ENCODE measurements at regions of chr15 and their contacts with region 1.

Region 1: DNA sequence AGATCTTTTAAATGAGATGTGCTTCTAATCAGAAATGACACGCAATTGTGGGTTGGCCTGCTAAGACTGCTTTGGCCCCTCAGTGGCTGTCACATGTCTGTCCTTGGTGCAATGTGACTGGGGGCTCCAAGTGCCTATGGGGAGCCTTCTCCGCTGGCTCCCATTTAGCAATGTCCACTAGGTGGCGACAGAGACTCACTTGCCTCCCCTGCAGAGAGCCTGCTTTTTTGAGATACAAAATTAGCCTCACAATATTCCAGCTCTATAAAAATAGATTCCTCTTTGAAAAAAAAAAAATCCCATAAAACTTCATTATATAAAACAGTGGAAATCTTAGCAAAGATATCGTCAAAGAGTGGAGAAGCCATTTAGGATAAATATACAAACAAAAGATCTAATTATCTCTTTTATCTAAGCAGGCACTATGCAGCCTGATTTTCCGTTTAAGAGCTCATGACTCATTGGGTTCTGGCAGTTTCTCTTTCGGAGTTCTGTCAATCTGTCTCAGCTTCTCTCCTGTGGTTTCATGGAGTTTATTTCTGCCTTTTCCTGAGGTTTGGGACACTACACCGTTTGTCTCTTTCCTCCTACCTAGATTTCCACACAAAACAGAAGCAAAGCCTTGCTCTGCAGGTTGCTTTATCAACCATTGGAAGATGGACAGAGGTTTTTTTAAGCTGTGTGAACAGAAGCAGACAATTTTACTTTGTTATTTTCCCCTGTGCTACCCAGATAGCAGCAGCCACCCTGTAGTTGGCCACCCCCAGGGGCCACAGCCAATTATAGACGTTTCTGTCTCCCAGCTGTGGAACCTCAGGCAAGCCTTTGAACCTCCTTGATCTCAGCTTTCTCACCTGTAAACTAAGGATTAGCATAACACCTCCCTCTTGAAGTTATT is 68.4 kb upstream of the TNFAIP8L3 start:
- DNase-seq: peak; percentile 81
- ATAC-seq: peak; percentile 95
- H3K4me3 Mint-ChIP-seq: no peak overlapping the region
- H3K27ac Mint-ChIP-seq: no peak overlapping the region
- H3K4me1 Mint-ChIP-seq: peaks cover 2% of the 10 kb centered on the region
- H3K27me3 Mint-ChIP-seq: peaks cover 17% of the 10 kb centered on the region
- CTCF ChIP-seq: peak; percentile 88

Region 2: DNA sequence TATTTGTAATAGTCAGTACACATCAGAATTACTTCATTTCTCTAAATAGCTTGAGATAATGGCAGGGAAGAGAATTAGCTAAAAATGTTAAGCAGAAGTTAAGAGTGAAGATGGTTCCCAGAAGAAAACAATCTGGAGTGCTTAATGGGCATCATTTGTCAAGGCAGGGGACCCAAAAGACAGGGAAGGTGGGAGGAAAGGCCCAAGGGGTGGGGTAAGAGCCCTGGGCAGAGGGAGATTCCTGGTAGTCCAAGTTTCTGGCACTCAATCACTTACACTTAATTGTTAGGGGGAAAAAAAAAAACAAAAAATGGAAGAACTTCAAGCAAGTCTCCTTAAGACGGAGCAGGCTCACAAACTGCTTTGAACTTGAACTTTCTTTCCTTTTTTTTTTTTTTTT is 97.3 kb before region 1 on chr15:
- CTCF ChIA-PET with region 1: interaction called, 10 read pairs
- POLR2A ChIA-PET with region 1: no interaction called
- intact Hi-C with region 1: no loop called
- DNase-seq: no peak
- ATAC-seq: no peak
- H3K4me3 Mint-ChIP-seq: no peak overlapping the region
- H3K27ac Mint-ChIP-seq: no peak overlapping the region
- H3K4me1 Mint-ChIP-seq: no peaks in the 10 kb centered on the region
- H3K27me3 Mint-ChIP-seq: peaks cover 16% of the 10 kb centered on the region
- CTCF ChIP-seq: no peak

Region 3: DNA sequence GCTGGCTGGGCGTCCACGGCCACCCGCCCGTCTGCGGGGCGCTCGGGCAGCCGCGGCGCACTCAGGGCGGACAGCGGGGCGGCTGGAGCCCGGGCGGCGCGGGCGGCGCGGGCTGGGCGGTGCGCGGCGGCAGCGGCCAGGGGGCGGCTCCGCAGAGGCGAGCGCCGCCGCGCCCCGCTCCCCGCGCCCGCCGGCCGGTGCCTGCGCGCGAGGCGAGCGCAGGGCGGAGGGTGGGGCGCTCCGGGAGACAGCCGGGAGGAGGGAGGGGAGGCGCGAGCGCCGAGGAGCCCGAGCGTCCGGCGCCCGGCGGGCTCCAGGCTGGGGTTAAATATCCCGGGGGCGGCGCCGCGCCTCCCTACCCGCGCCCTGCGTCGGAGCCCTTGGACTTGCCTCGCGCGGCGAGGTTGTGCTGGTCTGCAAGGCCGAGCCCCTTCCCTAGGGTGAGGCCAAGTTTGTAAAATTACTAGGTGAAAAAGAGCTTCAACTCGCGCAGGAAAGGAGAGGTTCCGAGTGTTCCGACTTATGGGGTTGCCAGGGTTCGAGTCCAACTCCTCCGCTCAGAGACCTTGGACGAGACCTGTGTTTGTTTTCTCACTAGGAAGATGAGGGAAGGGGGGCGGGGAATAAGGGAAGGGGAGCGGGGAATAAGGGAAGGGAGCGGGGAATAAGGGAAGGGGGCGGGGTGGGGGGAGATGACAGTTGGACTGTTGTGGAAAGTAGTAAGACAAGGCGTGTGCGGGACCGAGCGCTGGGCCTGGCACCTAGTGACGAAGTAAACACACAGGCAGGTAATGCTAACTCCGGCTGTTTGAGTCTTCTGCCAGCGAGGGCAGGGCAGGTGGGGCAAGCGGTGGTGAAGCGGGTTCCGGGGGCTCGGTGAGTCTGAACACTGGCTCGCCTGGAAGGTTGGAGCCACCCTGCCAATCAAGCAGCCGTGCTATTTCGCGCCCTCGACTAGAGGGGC is 68.2 kb before region 1 on chr15 and contains the start of gene TNFAIP8L3:
- CTCF ChIA-PET with region 1: no interaction called
- POLR2A ChIA-PET with region 1: no interaction called
- intact Hi-C with region 1: no loop called
- DNase-seq: peak; percentile 12
- ATAC-seq: peak; percentile 31
- H3K4me3 Mint-ChIP-seq: peak within 1 kb of the TSS; percentile 57
- H3K27ac Mint-ChIP-seq: no peak within 1 kb of the TSS
- H3K4me1 Mint-ChIP-seq: peaks cover 12% of the 10 kb centered on the region
- H3K27me3 Mint-ChIP-seq: peaks cover 69% of the 10 kb centered on the region
- CTCF ChIP-seq: no peak
- total RNA-seq, gene TNFAIP8L3: 0.14 TPM in 1 of 2 experiments, not detected in the other

Region 4: GRCh38 chr15:51192521-51193280 is 29.6 kb after region 1 on chr15:
- CTCF ChIA-PET with region 1: interaction called, 118 read pairs
- POLR2A ChIA-PET with region 1: no interaction called
- intact Hi-C with region 1: no loop called
- DNase-seq: peak; percentile 89
- ATAC-seq: peak; percentile 86
- H3K4me3 Mint-ChIP-seq: no peak overlapping the region
- H3K27ac Mint-ChIP-seq: no peak overlapping the region
- H3K4me1 Mint-ChIP-seq: peaks cover 4% of the 10 kb centered on the region
- H3K27me3 Mint-ChIP-seq: peaks cover 21% of the 10 kb centered on the region
- CTCF ChIP-seq: peak; percentile 94

Region 5: DNA sequence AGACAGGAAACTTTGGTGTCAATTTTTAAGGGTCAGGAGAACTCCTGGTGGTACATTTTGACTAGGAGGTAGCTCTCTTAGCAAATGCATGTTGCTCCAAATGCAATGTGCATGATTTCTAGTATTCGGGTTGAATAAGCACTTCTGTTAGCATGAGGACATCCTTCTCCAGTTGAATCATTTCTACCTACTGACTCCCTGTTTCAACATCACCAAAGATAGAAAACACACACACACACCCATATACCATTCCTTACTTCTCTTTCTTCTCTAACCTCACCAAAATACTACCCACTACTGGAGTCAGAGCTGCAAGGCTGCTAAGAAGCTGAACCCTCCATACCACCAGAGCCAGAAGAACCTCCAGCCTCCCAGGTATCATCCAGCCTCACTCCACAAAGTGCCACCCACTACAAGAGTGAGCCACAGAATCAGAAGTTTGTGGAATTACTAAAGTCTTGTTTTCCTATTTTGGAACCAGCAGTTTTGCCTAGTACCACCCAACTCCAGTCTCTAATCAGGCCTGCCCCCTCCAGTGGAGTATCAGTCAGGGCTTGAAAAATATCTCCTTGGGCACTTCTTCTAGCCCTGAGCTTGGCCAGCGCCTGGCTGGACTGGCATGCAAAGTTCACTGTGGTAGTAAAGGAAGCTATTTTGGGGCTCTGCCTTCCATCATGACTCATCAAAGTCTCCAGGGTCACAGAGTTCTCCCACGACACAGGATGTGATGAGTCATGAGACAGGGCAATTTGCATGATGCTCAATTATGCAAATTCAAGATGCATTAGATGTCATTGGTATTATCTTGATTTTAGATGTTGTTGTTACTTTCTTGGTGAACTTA is 65.0 kb after region 1 on chr15:
- CTCF ChIA-PET with region 1: interaction called, 12 read pairs
- POLR2A ChIA-PET with region 1: no interaction called
- intact Hi-C with region 1: no loop called
- DNase-seq: peak; percentile 48
- ATAC-seq: peak; percentile 88
- H3K4me3 Mint-ChIP-seq: no peak overlapping the region
- H3K27ac Mint-ChIP-seq: no peak overlapping the region
- H3K4me1 Mint-ChIP-seq: peaks cover 5% of the 10 kb centered on the region
- H3K27me3 Mint-ChIP-seq: peaks cover 7% of the 10 kb centered on the region
- CTCF ChIP-seq: no peak

Region 6: DNA sequence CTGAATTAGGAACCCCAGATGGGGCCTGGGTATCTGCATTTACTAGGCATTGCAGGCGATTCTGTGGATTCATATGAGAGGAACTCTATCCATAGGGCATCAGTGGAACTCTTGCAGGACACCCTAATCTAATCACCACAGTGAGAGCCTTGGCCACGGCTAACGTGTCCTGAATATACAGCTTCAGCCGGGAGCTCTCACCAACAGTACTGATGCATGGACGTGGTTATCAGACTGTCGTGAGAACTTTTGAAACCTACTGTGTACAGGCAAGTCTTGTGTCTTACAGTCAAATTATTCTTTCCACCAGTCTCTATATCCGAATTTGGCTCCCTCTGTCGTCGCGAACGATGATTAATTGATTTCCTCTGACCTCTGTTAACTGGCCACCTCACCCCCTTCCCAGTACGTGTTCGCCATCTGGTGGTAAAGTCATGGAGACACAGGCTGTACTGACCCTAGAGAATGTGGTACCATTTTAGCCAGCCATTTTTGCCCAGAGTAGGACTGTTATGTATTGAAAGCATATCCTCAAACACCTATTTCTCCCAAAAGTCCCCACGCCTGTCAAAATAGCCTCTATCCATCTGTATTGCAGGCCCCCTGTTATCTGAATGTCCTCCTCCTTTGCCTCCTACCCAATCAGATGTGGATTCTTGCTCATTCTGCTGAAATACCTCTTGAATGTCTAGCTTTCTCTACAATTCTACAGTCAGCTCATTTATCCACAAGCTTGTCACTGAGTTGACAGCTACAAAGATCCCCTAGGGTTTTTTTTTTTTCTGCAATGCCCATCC is 218.1 kb after region 1 on chr15:
- CTCF ChIA-PET with region 1: interaction called, 18 read pairs
- POLR2A ChIA-PET with region 1: no interaction called
- intact Hi-C with region 1: loop called (anchors 5 kb)
- DNase-seq: peak; percentile 61
- ATAC-seq: peak; percentile 90
- H3K4me3 Mint-ChIP-seq: no peak overlapping the region
- H3K27ac Mint-ChIP-seq: no peak overlapping the region
- H3K4me1 Mint-ChIP-seq: no peaks in the 10 kb centered on the region
- H3K27me3 Mint-ChIP-seq: peaks cover 10% of the 10 kb centered on the region
- CTCF ChIP-seq: peak; percentile 68

Region 7: GRCh38 chr15:51803961-51804360 is 640.8 kb after region 1 on chr15:
- CTCF ChIA-PET with region 1: no interaction called
- POLR2A ChIA-PET with region 1: no interaction called
- intact Hi-C with region 1: no loop called
- DNase-seq: no peak
- ATAC-seq: no peak
- H3K4me3 Mint-ChIP-seq: no peak overlapping the region
- H3K27ac Mint-ChIP-seq: no peak overlapping the region
- H3K4me1 Mint-ChIP-seq: no peaks in the 10 kb centered on the region
- H3K27me3 Mint-ChIP-seq: no peaks in the 10 kb centered on the region
- CTCF ChIP-seq: no peak

Measured in activated CD8-positive, alpha-beta T cell treated with anti-CD3 and anti-CD28 coated beads for 36 hours (primary cell).